ENCODE measurements at regions of chr9 and their contacts with region 1.

Region 1: GRCh38 chr9:68895741-68896478 is 118.0 kb downstream of the PRKACG start:
- DNase-seq: no peak
- ATAC-seq: no peak
- H3K4me3 ChIP-seq: no peak overlapping the region
- H3K27ac ChIP-seq: no peak overlapping the region
- H3K4me1 ChIP-seq: no peaks in the 10 kb centered on the region
- H3K27me3 ChIP-seq: no peaks in the 10 kb centered on the region
- CTCF ChIP-seq: no peak

Region 2: GRCh38 chr9:68690088-68690487 is 205.8 kb before region 1 on chr9:
- intact Hi-C with region 1: no loop called
- DNase-seq: no peak
- ATAC-seq: peak; percentile 53 to 82 (median 76)
- H3K4me3 ChIP-seq: no peak overlapping the region
- H3K27ac ChIP-seq: no peak overlapping the region
- H3K4me1 ChIP-seq: no peaks in the 10 kb centered on the region
- H3K27me3 ChIP-seq: peaks cover 0 to 3% (median 0%) of the 10 kb centered on the region in 3 donors
- CTCF ChIP-seq: no peak

Region 3: GRCh38 chr9:68779558-68780384 is 116.1 kb before region 1 on chr9:
- intact Hi-C with region 1: loop called in 1 of 2 experiments (anchors 10 kb)
- DNase-seq: peak; percentile 96 to 98
- ATAC-seq: peak; percentile 91 to 96 (median 95)
- H3K4me3 ChIP-seq: peak overlapping the region; percentile 77
- H3K27ac ChIP-seq: peak overlapping the region; percentile 93
- H3K4me1 ChIP-seq: peaks cover 45% of the 10 kb centered on the region
- H3K27me3 ChIP-seq: no peaks in the 10 kb centered on the region
- CTCF ChIP-seq: peak; percentile 28

Region 4: DNA sequence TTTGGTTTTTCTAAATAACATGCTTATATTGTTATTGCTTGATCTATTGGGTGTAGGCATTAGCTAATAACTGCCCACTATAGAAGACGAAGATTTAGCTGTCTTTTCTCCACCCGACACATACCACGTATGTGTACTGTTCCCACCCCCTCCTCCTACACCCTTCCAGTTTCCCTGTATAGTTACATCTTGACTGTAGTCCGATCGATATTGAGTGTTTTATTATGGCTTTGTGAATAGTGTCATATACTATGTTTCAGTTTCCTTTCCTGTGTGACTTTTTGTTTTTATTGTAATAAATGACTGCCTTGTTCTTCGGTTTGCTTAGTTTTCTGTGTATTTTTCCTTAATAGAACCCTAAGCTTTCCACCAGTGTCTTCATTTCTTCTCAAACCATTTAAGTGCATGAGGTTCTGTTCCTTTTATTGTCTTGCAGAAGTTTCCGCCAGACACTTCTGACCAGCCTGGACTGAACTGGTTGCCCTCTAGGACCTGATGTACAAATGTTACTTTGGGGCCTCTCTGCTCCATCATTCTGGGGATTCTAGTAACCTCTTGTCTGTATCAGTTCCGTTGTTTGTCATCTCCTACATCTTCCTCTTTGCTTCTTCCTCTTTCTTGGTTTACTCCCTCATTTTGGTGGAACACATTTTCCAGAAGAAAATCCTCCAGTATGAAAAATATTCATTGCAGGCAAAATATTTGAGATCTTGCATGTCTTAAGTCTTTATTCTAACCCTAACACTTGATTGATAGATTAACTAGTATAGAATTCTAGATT is 56.2 kb after region 1 on chr9:
- intact Hi-C with region 1: loop called in 1 of 2 experiments (anchors 10 kb)
- DNase-seq: no peak
- ATAC-seq: no peak
- H3K4me3 ChIP-seq: no peak overlapping the region
- H3K27ac ChIP-seq: no peak overlapping the region
- H3K4me1 ChIP-seq: no peaks in the 10 kb centered on the region
- H3K27me3 ChIP-seq: no peaks in the 10 kb centered on the region
- CTCF ChIP-seq: no peak